ENCODE measurements at regions of chr12 and their contacts with region 1.

Region 1: GRCh38 chr12:25855716-25856115 is 102.8 kb upstream of the RASSF8 start:
- DNase-seq: no peak
- ATAC-seq: no peak
- H3K4me3 ChIP-seq: no peak overlapping the region
- H3K4me3 Mint-ChIP-seq: no peak overlapping the region
- H3K27ac ChIP-seq: no peak overlapping the region
- H3K27ac Mint-ChIP-seq: no peak overlapping the region
- H3K4me1 ChIP-seq: peaks cover 0 to 17% of the 10 kb centered on the region in 2 experiments
- H3K4me1 Mint-ChIP-seq: peaks cover 5 to 26% (median 10%) of the 10 kb centered on the region in 3 donors
- H3K27me3 ChIP-seq: no peaks in the 10 kb centered on the region
- H3K27me3 Mint-ChIP-seq: no peaks in the 10 kb centered on the region

Region 2: DNA sequence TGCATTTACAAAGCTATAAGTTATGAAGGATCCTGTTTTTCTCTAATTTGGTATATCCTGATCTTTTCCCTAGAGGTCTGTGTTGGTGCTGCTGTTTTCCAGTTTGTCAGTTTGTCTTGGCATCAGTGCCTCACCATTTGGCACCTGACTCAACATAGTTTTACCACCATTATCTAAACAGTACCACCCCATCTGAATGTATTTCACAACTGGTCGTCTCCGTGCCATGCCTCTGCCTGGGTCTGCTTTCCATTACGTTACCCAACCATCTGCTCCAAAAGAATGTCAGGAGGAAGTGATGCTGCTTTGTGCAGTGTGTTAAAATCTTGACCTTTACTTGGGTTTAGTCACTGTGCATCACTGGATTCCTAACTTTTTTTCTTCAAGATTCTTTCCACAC is 26.5 kb before region 1 on chr12:
- CTCF ChIA-PET with region 1: no interaction called
- POLR2A ChIA-PET with region 1: no interaction called
- DNase-seq: no peak
- ATAC-seq: no peak
- H3K4me3 ChIP-seq: no peak overlapping the region
- H3K4me3 Mint-ChIP-seq: no peak overlapping the region
- H3K27ac ChIP-seq: no peak overlapping the region
- H3K27ac Mint-ChIP-seq: no peak overlapping the region
- H3K4me1 ChIP-seq: no peaks in the 10 kb centered on the region
- H3K4me1 Mint-ChIP-seq: no peaks in the 10 kb centered on the region
- H3K27me3 ChIP-seq: no peaks in the 10 kb centered on the region
- H3K27me3 Mint-ChIP-seq: peaks cover 2 to 4% of the 10 kb centered on the region in 2 donors

Region 3: DNA sequence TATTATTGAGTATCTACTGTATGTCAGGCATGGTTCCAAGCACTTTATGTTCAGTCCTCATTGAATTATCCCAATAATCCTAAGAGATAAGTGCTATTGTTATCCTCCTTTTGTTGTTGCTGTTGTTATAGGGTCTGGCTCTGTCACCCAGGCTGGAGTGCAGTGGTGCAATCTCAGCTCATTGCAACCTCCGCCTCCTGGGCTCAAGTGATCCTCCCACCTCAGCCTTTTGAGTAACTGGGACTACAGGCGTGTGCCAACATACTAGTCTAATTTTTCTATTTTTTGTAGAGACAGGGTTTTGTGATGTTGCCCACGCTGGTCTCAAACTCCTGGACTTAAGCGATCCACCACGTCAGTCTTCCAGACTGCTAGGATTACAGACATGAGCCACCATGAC is 17.5 kb after region 1 on chr12:
- CTCF ChIA-PET with region 1: interaction called in 1 of 2 experiments, 3 read pairs
- POLR2A ChIA-PET with region 1: interaction called in 1 of 2 experiments, 10 read pairs
- DNase-seq: no peak
- ATAC-seq: no peak
- H3K4me3 ChIP-seq: no peak overlapping the region
- H3K4me3 Mint-ChIP-seq: no peak overlapping the region
- H3K27ac ChIP-seq: no peak overlapping the region
- H3K27ac Mint-ChIP-seq: no peak overlapping the region
- H3K4me1 ChIP-seq: no peaks in the 10 kb centered on the region
- H3K4me1 Mint-ChIP-seq: no peaks in the 10 kb centered on the region
- H3K27me3 ChIP-seq: no peaks in the 10 kb centered on the region
- H3K27me3 Mint-ChIP-seq: no peaks in the 10 kb centered on the region

Region 4: DNA sequence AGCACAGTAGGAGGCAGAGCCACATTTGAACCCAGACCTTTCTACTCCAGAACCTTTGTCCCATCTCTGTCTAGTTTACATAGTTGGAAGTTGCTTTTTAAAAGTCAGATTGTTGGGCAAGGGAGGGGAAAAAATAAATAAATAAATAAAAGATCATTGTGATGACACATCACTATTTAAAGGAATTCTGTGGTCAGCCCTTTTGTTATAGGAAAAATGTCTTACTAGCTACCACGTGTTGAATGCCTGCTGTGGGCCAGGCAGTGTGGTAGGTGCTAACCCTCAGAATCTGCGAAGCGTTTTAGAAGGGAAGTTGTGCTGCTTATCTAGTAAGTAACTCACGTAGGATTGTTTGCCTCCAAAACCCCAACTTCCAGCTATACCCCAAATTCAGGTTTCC is 206.8 kb after region 1 on chr12:
- CTCF ChIA-PET with region 1: no interaction called
- POLR2A ChIA-PET with region 1: interaction called in 1 of 2 experiments, 11 read pairs
- DNase-seq: no peak
- ATAC-seq: no peak
- H3K4me3 ChIP-seq: no peak overlapping the region
- H3K4me3 Mint-ChIP-seq: no peak overlapping the region
- H3K27ac ChIP-seq: no peak overlapping the region
- H3K27ac Mint-ChIP-seq: no peak overlapping the region
- H3K4me1 ChIP-seq: no peaks in the 10 kb centered on the region
- H3K4me1 Mint-ChIP-seq: no peaks in the 10 kb centered on the region
- H3K27me3 ChIP-seq: peaks cover 0 to 3% of the 10 kb centered on the region in 2 experiments
- H3K27me3 Mint-ChIP-seq: peaks cover 3 to 16% of the 10 kb centered on the region in 2 donors